CD4-positive, alpha-beta T cell (primary cell): ENCODE measurements at regions of chr17 and their contacts with region 1.

Region 1: GRCh38 chr17:7867881-7868329 is 10.1 kb downstream of the CYB5D1 start:
- DNase-seq: peak in 3 of 14 experiments; percentile 38 to 49 (median 47)
- ATAC-seq: peak; percentile 78
- H3K4me3 ChIP-seq: peak overlapping the region; percentile 26
- H3K4me3 Mint-ChIP-seq: peak overlapping the region; percentile 9
- H3K27ac ChIP-seq: peak overlapping the region in 1 of 2 donors; percentile 52
- H3K27ac Mint-ChIP-seq: peak overlapping the region; percentile 62
- H3K4me1 ChIP-seq: peaks cover 20% of the 10 kb centered on the region
- H3K4me1 Mint-ChIP-seq: peaks cover 32% of the 10 kb centered on the region
- H3K27me3 ChIP-seq: no peaks in the 10 kb centered on the region
- H3K27me3 Mint-ChIP-seq: no peaks in the 10 kb centered on the region
- CTCF ChIP-seq: no peak

Region 2: GRCh38 chr17:7887482-7888183 is 19.7 kb after region 1 on chr17:
- CTCF ChIA-PET with region 1: no interaction called
- POLR2A ChIA-PET with region 1: interaction called, 13 read pairs
- intact Hi-C with region 1: loop called in 1 of 2 experiments (anchors 2 kb)
- DNase-seq: peak; percentile 72 to 97 (median 86)
- ATAC-seq: peak; percentile 69
- H3K4me3 ChIP-seq: peak overlapping the region; percentile 98
- H3K4me3 Mint-ChIP-seq: no peak overlapping the region
- H3K27ac ChIP-seq: peak overlapping the region; percentile 75 to 96
- H3K27ac Mint-ChIP-seq: no peak overlapping the region
- H3K4me1 ChIP-seq: peaks cover 49% of the 10 kb centered on the region
- H3K4me1 Mint-ChIP-seq: peaks cover 6% of the 10 kb centered on the region
- H3K27me3 ChIP-seq: no peaks in the 10 kb centered on the region
- H3K27me3 Mint-ChIP-seq: no peaks in the 10 kb centered on the region
- CTCF ChIP-seq: no peak

Region 3: DNA sequence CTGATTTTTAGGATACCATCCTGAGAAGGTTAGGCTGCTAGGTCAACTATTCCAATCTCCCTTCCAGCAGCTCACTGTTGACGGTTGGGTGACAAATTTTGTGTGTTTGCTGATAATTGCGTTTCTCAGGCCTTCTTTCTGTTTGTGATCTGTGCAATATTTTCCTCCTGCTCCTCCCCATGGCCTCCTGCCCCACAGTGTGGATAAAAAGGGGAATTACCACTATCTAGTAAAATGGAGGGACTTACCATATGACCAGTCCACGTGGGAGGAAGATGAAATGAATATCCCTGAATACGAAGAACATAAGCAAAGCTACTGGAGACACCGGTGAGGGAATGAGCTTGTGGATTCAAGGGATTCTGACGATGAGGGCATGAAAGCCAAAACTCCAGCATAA is 29.9 kb after region 1 on chr17:
- CTCF ChIA-PET with region 1: interaction called, 17 read pairs
- POLR2A ChIA-PET with region 1: no interaction called
- intact Hi-C with region 1: no loop called
- DNase-seq: peak in 3 of 14 experiments; percentile 46 to 68 (median 59)
- ATAC-seq: peak; percentile 82
- H3K4me3 ChIP-seq: no peak overlapping the region
- H3K4me3 Mint-ChIP-seq: no peak overlapping the region
- H3K27ac ChIP-seq: no peak overlapping the region
- H3K27ac Mint-ChIP-seq: peak overlapping the region; percentile 7
- H3K4me1 ChIP-seq: peaks cover 3% of the 10 kb centered on the region
- H3K4me1 Mint-ChIP-seq: peaks cover 12% of the 10 kb centered on the region
- H3K27me3 ChIP-seq: no peaks in the 10 kb centered on the region
- H3K27me3 Mint-ChIP-seq: no peaks in the 10 kb centered on the region
- CTCF ChIP-seq: peak; percentile 11

Region 4: GRCh38 chr17:8275421-8276290 is 407.8 kb after region 1 on chr17:
- CTCF ChIA-PET with region 1: no interaction called
- POLR2A ChIA-PET with region 1: no interaction called
- intact Hi-C with region 1: no loop called
- DNase-seq: no peak
- ATAC-seq: no peak
- H3K4me3 ChIP-seq: no peak overlapping the region
- H3K4me3 Mint-ChIP-seq: no peak overlapping the region
- H3K27ac ChIP-seq: no peak overlapping the region
- H3K27ac Mint-ChIP-seq: no peak overlapping the region
- H3K4me1 ChIP-seq: no peaks in the 10 kb centered on the region
- H3K4me1 Mint-ChIP-seq: no peaks in the 10 kb centered on the region
- H3K27me3 ChIP-seq: no peaks in the 10 kb centered on the region
- H3K27me3 Mint-ChIP-seq: no peaks in the 10 kb centered on the region
- CTCF ChIP-seq: no peak